ENCODE measurements at regions of chr5 and their contacts with region 1.

Region 1: DNA sequence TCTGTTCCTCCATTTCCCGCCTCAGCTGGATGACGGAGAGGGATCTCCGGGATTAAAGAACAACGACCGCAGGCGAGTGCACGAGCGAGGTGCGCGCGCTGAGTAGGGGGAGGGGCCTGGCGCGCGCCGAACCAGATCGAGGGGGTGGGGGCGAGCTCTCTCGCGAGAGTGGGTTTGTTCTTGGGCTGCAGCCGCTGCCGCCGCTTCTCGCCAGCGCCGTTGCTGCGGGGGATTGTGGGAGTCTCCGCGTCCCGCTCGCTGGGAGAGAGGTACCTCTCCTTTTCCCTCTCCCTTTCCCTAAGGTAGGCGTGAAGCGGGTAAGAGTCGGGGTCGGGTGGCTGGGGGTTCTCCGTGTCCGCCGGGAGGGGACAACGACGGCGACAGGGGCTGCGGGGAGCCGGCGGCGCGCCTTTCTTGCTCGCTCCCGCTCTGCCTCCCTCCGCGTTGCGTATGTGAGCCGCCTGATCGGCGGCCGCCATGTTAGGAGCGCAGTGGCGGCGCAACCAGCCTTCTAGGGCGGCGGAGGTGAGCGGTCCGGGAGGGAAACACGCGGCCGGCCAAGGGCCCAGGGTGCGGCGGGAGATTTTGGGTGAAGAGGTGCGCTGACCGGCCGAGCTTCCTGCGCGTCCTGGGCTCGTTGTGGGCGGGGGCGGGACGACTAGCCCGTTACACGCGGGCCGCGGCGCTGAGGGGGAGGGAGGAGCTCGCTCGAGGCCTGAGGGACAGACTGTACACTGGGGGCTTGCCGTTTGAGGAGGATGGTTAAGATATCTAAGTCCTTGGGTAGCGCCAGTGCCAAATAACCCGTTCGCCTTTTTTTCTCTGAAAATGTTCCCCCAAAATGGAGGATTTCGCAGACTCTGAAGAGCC is at the start of gene MATR3:
- DNase-seq: peak; percentile 74
- ATAC-seq: peak; percentile 84
- H3K4me3 ChIP-seq: peak within 1 kb of the TSS; percentile 89
- H3K27ac ChIP-seq: peak within 1 kb of the TSS; percentile 98
- H3K4me1 ChIP-seq: peaks cover 11% of the 10 kb centered on the region
- H3K27me3 ChIP-seq: no peaks in the 10 kb centered on the region
- CTCF ChIP-seq: no peak
- EP300 ChIP-seq: peak in 1 of 2 experiments; percentile 48; a peak in 1 of 4 replicates
- POLR2A ChIP-seq: peak; percentile 98
- RAD21 ChIP-seq: no peak
- polyA plus RNA-seq, gene MATR3: 149 to 187 TPM

Region 2: DNA sequence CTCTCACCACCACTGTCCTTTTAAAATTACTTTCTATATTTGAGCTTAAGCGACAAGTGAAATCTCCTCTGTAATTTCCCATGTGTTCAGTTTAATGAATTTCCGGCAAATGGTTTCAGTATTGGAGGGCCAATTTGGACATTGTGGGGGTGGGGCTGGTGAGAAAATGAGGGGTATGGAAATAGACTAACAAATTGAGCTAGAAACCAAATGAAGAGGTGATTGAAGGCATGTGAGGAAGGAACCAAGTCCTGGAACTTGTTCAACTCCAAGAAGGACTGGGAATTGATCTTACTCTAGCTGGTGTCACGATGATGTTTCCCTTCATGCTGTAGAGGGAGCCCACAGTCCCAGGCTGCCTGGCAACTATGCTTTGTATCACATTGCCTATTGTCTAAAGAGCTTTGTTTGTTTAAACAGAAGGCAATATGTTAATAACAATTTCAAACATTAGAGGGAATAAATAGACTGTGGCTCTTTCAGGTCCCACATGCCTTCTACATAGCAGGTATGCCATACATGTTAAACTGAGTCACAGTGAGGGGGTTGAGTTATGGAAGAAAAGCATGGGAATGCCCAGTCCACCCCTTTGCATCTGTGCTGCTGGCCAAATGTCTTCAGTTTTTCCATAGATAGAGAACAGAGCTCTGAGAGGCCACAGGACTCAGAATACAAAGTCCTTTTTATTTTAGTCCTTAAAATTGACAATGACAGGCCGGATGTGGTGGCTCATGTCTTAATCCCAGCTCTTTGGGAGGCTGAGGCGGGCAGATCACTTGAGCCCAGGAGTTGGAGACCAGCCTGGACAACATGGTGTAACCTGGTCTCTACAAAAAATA is 25.2 kb before region 1 on chr5:
- CTCF ChIA-PET with region 1: interaction called, 6 read pairs
- POLR2A ChIA-PET with region 1: interaction called, 21 read pairs
- RAD21 ChIA-PET with region 1: interaction called, 15 read pairs
- SMC1A ChIA-PET with region 1: interaction called, 136 read pairs
- in situ Hi-C with region 1: no loop called
- intact Hi-C with region 1: no loop called
- DNase-seq: no peak
- ATAC-seq: peak; percentile 41
- H3K4me3 ChIP-seq: 0 out of 2 replicates have a peak overlapping the region, but pooled peaks have one; percentile 6
- H3K27ac ChIP-seq: peak overlapping the region; percentile 40
- H3K4me1 ChIP-seq: peaks cover 38% of the 10 kb centered on the region
- H3K27me3 ChIP-seq: no peaks in the 10 kb centered on the region
- CTCF ChIP-seq: peak; percentile 13 to 21 (median 14); a peak in 2 of 6 replicates
- EP300 ChIP-seq: no peak
- POLR2A ChIP-seq: no peak
- RAD21 ChIP-seq: peak; percentile 40; the same call in 1 of the 2 replicates

Region 3: GRCh38 chr5:139312075-139312474 is 18.3 kb after region 1 on chr5:
- CTCF ChIA-PET with region 1: interaction called, 31 read pairs
- POLR2A ChIA-PET with region 1: interaction called, 4 read pairs
- RAD21 ChIA-PET with region 1: interaction called, 5 read pairs
- SMC1A ChIA-PET with region 1: interaction called, 54 read pairs
- in situ Hi-C with region 1: no loop called
- intact Hi-C with region 1: no loop called
- DNase-seq: no peak
- ATAC-seq: no peak
- H3K4me3 ChIP-seq: no peak overlapping the region
- H3K27ac ChIP-seq: no peak overlapping the region
- H3K4me1 ChIP-seq: no peaks in the 10 kb centered on the region
- H3K27me3 ChIP-seq: no peaks in the 10 kb centered on the region
- CTCF ChIP-seq: no peak
- EP300 ChIP-seq: no peak
- POLR2A ChIP-seq: no peak
- RAD21 ChIP-seq: no peak

Region 4: GRCh38 chr5:139341650-139342422 is 48.1 kb after region 1 on chr5 and contains the start of gene PAIP2:
- CTCF ChIA-PET with region 1: interaction called, 6 read pairs
- POLR2A ChIA-PET with region 1: interaction called, 16 read pairs
- RAD21 ChIA-PET with region 1: interaction called, 4 read pairs
- SMC1A ChIA-PET with region 1: interaction called, 4 read pairs
- in situ Hi-C with region 1: no loop called
- intact Hi-C with region 1: no loop called
- DNase-seq: peak; percentile 90
- ATAC-seq: peak; percentile 89
- H3K4me3 ChIP-seq: peak within 1 kb of the TSS; percentile 93
- H3K27ac ChIP-seq: peak within 1 kb of the TSS; percentile 92
- H3K4me1 ChIP-seq: peaks cover 11% of the 10 kb centered on the region
- H3K27me3 ChIP-seq: no peaks in the 10 kb centered on the region
- CTCF ChIP-seq: peak; percentile 90 to 96 (median 90)
- EP300 ChIP-seq: peak in 1 of 2 experiments; percentile 30; a peak in 1 of 4 replicates
- POLR2A ChIP-seq: peak; percentile 97
- RAD21 ChIP-seq: peak; percentile 58
- polyA plus RNA-seq, gene PAIP2: 100 to 113 TPM

Region 5: DNA sequence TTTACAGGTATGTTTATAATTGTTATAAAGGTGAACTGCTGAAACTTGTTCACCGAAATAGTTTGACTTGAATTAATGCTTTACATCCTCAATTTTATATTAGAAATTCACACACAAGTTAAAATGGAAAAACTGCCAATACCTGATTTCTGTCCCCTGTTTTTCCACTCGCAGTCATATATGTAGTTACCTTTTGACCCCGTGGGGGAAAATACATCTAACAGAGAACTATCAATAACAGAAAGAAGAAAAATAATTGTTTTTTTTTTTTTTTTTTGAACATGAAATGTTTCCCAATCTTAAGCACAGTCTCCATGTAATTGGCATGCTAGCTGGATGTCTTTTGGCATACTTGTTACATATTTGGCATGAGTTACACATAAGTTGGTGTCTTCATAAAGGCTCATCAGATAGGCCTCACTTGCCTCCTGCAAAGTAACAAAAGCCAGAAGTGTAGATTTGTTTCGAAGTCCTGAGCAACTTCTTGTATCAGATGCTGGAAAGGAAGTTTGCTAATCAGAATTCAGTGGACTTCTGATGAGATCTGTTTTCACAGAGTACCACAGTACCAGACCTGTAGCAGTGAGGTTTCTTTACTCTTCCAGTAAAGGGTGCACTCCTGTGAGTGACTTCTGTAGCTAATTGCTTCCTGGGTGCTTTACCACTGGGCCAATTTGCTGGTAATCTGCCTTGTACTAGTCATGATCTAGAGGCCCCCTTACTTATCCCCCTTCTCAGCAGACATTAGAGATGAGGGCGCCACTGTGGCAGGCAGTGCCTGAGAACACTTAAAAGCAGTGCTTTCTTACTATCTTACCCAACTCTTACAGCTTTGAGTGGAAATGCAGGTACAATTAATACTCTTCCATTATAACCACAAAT is 318.2 kb after region 1 on chr5:
- CTCF ChIA-PET with region 1: no interaction called
- POLR2A ChIA-PET with region 1: no interaction called
- RAD21 ChIA-PET with region 1: no interaction called
- SMC1A ChIA-PET with region 1: no interaction called
- in situ Hi-C with region 1: no loop called
- intact Hi-C with region 1: no loop called
- DNase-seq: no peak
- ATAC-seq: peak; percentile 90
- H3K4me3 ChIP-seq: no peak overlapping the region
- H3K27ac ChIP-seq: peak overlapping the region; percentile 45; the same call in 1 of the 2 replicates
- H3K4me1 ChIP-seq: peaks cover 9% of the 10 kb centered on the region; the same call in 1 of the 2 replicates
- H3K27me3 ChIP-seq: no peaks in the 10 kb centered on the region
- CTCF ChIP-seq: no peak
- EP300 ChIP-seq: no peak
- POLR2A ChIP-seq: no peak
- RAD21 ChIP-seq: no peak

Region 6: GRCh38 chr5:139648205-139649081 is 354.7 kb after region 1 on chr5 and contains the start of gene CXXC5:
- CTCF ChIA-PET with region 1: no interaction called
- POLR2A ChIA-PET with region 1: no interaction called
- RAD21 ChIA-PET with region 1: no interaction called
- SMC1A ChIA-PET with region 1: no interaction called
- in situ Hi-C with region 1: no loop called
- intact Hi-C with region 1: no loop called
- DNase-seq: no peak
- ATAC-seq: peak; percentile 55
- H3K4me3 ChIP-seq: peak within 1 kb of the TSS; percentile 96
- H3K27ac ChIP-seq: peak within 1 kb of the TSS; percentile 91
- H3K4me1 ChIP-seq: peaks cover 35% of the 10 kb centered on the region
- H3K27me3 ChIP-seq: no peaks in the 10 kb centered on the region
- CTCF ChIP-seq: no peak
- EP300 ChIP-seq: no peak
- POLR2A ChIP-seq: peak; percentile 83
- RAD21 ChIP-seq: no peak
- polyA plus RNA-seq, gene CXXC5: 1.8 to 6.0 TPM

Measured in GM12878 (cell line).